Transverse colon (tissue), 4 donors: ENCODE measurements at regions of chr1 and their contacts with region 1.

Region 1: GRCh38 chr1:229217734-229218133 is 53.2 kb upstream of the RAB4A start:
- DNase-seq: no peak
- H3K4me3 ChIP-seq: no peak overlapping the region
- H3K27ac ChIP-seq: no peak overlapping the region
- H3K4me1 ChIP-seq: peaks cover 0 to 17% (median 7%) of the 10 kb centered on the region in 4 donors
- H3K27me3 ChIP-seq: no peaks in the 10 kb centered on the region
- CTCF ChIP-seq: no peak
- EP300 ChIP-seq: no peak
- POLR2A ChIP-seq: no peak

Region 2: DNA sequence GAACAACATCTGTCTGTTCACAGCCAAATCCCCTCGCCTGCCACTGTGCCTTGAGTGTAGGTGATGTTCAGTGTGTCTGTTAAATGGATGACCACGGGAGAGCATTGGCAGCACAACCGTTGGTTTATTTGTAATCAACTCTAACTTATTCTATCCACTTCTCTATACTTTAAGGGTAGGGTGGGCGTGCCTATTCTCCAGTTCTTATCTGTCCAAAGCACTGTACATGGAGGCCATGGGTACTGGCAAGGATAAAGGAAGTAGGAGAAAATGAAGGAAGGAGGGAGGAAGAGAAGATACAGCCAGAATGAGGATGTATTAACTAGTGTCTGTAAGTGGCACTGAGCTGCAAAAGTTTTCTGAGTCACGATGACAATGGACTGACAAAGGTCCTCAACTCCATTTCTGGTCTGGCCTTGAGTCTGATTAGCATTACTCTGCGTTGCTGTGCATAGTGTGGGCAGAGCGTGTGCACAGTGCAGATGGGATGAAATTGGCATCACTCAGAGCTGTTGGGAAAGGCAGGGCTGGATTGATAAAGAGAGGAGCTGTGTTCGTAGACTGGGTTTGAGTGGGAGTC is 475.4 kb before region 1 on chr1:
- in situ Hi-C with region 1: loop called in 1 of 4 experiments (anchors 10 kb)
- intact Hi-C with region 1: loop called (anchors 2 kb)
- DNase-seq: no peak
- H3K4me3 ChIP-seq: no peak overlapping the region
- H3K27ac ChIP-seq: no peak overlapping the region
- H3K4me1 ChIP-seq: peaks cover 5 to 29% (median 9%) of the 10 kb centered on the region in 4 donors
- H3K27me3 ChIP-seq: no peaks in the 10 kb centered on the region
- CTCF ChIP-seq: no peak
- EP300 ChIP-seq: no peak
- POLR2A ChIP-seq: no peak

Region 3: DNA sequence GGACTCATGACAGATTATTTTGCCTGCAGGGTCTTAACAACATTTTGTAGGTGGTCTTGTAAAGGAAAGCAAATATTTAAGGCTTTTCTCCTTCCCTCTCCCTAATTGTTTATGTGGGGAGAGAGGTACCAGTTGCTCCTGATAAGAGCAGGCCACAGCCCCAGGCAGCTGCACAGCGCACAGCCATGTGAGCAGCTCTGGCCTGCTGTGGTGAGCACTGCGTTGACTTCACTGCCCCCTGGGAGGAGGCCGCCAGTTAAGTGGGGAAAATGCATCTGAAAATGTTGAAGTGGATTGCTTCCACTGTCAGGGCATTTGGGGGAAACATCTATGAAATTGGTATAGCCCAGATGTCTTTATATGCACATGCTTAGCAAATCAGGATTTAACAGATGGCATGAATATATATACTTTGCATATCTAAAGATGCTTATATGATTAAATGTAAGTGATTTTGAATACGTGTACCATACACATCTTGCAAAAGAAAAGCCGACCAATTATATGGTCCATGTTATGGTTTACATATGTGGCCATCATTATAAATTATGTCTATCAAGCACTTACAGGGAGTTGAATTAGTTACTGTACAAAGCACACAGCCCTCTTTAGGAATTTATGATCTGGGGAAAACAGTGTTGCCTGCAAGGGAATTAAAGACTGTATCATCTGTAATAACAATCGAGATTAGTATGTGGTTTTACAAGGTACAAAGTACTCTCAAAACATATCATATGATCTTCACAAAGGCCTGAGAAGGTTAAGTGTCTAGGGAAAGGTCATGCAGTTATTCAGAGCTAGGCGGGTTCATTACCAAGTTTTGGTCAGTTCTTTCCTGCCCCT is 350.4 kb before region 1 on chr1:
- in situ Hi-C with region 1: no loop called
- intact Hi-C with region 1: no loop called
- DNase-seq: no peak
- H3K4me3 ChIP-seq: no peak overlapping the region
- H3K27ac ChIP-seq: no peak overlapping the region
- H3K4me1 ChIP-seq: peaks cover 0 to 36% (median 4%) of the 10 kb centered on the region in 4 donors
- H3K27me3 ChIP-seq: no peaks in the 10 kb centered on the region
- CTCF ChIP-seq: no peak
- EP300 ChIP-seq: no peak
- POLR2A ChIP-seq: no peak